Thyroid gland (tissue), 4 donors: ENCODE measurements at regions of chr20 and their contacts with region 1.

Region 1: DNA sequence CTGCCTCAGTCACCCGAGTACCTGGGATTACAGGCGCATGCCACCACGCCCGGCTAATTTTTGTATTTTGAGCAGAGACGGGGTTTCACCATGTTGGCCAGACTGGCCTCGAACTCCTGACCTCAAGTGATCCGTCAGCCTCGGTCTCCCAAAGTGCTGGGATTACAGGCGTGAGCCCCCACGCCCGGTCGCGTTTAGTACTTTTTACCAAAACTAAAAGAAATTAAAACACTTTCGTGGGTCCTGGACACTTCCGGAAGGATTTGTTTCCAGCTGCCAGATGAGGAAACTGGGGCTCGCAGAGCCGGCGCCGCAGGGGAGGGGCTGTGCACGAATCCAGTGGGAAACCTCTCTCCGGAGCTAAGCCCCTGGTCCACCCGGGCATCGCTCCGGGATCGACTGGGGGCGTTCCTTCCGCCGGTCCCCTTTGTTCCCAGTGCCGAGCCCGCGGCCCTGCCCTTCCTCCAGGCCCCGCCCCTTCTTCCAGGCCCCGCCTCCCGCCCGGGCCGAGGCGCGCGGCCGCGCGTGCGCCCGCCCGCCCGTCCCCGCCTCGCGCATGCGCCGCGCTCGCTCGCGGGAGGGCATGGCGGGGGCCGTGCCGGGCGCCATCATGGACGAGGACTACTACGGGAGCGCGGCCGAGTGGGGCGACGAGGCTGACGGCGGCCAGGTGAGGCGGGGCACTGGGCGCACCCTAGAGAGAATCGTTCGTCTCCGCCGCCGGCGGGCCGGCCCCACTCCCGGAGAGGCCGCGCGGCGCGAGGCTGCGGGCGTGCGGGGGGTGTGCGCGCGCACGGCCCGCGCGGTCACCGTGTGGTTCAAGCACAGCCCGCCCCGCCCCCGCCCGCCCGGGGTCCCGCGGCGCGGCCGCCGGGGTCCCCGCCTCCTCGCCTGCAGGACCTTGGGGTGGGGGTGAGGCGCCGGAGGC is at the start of gene NELFCD:
- DNase-seq: peak; percentile 79 to 84
- H3K4me3 ChIP-seq: peak within 1 kb of the TSS; percentile 34 to 85 (median 65)
- H3K27ac ChIP-seq: peak within 1 kb of the TSS; percentile 67 to 83 (median 72)
- H3K4me1 ChIP-seq: peaks cover 32 to 34% of the 10 kb centered on the region in 2 donors
- H3K27me3 ChIP-seq: no peaks in the 10 kb centered on the region
- CTCF ChIP-seq: no peak
- POLR2A ChIP-seq: peak; percentile 70 to 96
- total RNA-seq, gene NELFCD: 96.6 to 129 (median 113) TPM

Region 2: DNA sequence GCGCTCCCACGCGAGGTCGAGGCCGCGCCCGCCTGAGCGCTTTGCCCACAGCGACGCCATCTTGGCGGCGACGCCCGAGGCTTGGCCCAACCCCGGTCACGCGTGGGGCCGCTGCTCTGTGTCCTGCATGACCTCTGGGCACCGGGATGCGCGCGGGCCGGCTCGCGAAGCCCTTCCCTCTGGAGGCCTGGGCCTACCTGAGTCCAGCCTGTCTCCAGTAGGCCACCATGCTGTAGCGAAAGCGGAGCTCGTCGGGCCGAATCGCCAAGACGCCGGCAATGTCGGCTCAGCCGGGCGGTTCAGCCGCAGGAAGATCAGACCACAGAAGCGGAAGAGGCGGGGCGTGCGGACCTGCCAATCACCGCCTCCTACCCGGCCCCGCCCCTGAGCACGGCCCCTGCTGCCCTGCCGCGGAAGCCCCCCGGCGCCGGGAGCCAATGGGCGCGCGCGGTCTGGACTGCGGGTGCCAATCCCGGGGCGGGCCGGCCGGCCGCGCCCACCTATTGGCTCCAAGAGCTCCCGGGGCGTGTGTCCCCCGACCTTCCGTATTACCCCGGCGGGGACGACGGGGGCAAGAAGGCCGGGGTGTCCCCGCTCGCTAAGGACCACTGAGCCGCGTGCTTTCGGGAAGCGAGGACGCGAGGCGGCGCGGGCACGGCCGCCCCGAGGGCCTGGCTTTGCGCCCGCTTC is 51.2 kb after region 1 on chr20 and contains the start of gene ATP5F1E:
- intact Hi-C with region 1: loop called (anchors 10 kb)
- DNase-seq: peak; percentile 97 to 98
- H3K4me3 ChIP-seq: peak within 1 kb of the TSS; percentile 58 to 68 (median 62)
- H3K27ac ChIP-seq: peak within 1 kb of the TSS; percentile 79 to 92 (median 86)
- H3K4me1 ChIP-seq: peaks cover 29 to 34% of the 10 kb centered on the region in 2 donors
- H3K27me3 ChIP-seq: no peaks in the 10 kb centered on the region
- CTCF ChIP-seq: no peak
- POLR2A ChIP-seq: peak; percentile 80 to 92
- total RNA-seq, gene ATP5F1E: 13.3 to 57.8 (median 32.4) TPM